HCT116 (cell line): ENCODE measurements at regions of chr11 and their contacts with region 1.

Region 1: GRCh38 chr11:111688028-111688427 is 78.2 kb downstream of the PPP2R1B start:
- DNase-seq: no peak
- ATAC-seq: no peak
- H3K4me3 ChIP-seq: no peak overlapping the region
- H3K27ac ChIP-seq: no peak overlapping the region
- H3K4me1 ChIP-seq: no peaks in the 10 kb centered on the region
- H3K27me3 ChIP-seq: no peaks in the 10 kb centered on the region
- CTCF ChIP-seq: no peak
- POLR2A ChIP-seq: no peak
- RAD21 ChIP-seq: no peak

Region 2: GRCh38 chr11:111623527-111624030 is 64.4 kb before region 1 on chr11:
- CTCF ChIA-PET with region 1: no interaction called
- POLR2A ChIA-PET with region 1: no interaction called
- RAD21 ChIA-PET with region 1: no interaction called
- intact Hi-C with region 1: loop called (anchors 10 kb)
- DNase-seq: no peak
- ATAC-seq: no peak
- H3K4me3 ChIP-seq: no peak overlapping the region
- H3K27ac ChIP-seq: no peak overlapping the region
- H3K4me1 ChIP-seq: no peaks in the 10 kb centered on the region
- H3K27me3 ChIP-seq: no peaks in the 10 kb centered on the region
- CTCF ChIP-seq: no peak
- POLR2A ChIP-seq: no peak
- RAD21 ChIP-seq: no peak